HEK293 (cell line): ENCODE measurements at regions of chr6 and their contacts with region 1.

Region 1: DNA sequence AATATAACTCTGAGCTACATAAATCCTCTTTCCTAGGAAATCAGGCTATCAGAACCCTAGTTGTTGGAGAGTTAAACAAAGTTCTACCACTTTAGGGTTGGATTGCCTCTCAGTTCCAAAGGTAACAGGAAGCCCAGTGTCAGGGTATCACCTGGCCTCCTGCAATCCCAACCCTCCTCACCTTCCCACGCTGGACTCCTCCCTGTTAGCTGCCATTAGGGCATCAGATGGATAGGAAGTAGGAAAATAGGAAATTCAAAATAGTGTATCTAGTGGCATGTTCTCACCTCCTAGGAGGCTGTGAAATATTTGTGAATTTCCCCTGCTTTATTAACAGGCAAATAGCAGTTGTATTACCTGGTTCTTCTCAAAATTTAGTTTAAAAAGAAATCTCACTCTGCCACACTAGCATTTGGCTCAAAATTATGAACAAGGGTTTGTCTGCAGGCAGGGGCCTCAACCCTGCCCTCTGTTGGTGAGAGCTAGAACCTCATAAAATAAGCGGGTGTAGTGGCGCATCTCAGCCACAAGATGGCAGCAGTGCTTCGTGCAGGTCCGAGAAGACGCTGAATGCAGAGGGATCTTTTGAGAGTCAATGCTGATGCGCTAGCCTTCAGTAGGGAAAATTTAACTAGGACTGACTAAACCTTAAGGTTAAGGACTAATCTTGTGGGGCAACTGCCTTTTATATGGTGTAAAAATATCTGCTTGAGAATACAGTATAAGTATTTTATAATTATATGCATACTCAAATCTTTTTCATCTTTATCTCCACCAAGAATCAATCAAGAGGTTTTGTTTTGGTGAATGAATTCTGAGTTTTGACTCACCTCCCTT is 209.8 kb upstream of the KCNQ5 start:
- H3K4me3 ChIP-seq: no peak overlapping the region
- H3K27ac ChIP-seq: no peak overlapping the region
- H3K4me1 ChIP-seq: no peaks in the 10 kb centered on the region
- CTCF ChIP-seq: peak; percentile 98

Region 2: GRCh38 chr6:72381076-72381475 is 31.0 kb before region 1 on chr6:
- CTCF ChIA-PET with region 1: interaction called, 13 read pairs
- POLR2A ChIA-PET with region 1: no interaction called
- H3K4me3 ChIP-seq: no peak overlapping the region
- H3K27ac ChIP-seq: no peak overlapping the region
- H3K4me1 ChIP-seq: no peaks in the 10 kb centered on the region
- CTCF ChIP-seq: no peak

Region 3: GRCh38 chr6:72425003-72425681 is 13.1 kb after region 1 on chr6:
- CTCF ChIA-PET with region 1: interaction called, 58 read pairs
- POLR2A ChIA-PET with region 1: no interaction called
- H3K4me3 ChIP-seq: no peak overlapping the region
- H3K27ac ChIP-seq: no peak overlapping the region
- H3K4me1 ChIP-seq: no peaks in the 10 kb centered on the region
- CTCF ChIP-seq: no peak

Region 4: DNA sequence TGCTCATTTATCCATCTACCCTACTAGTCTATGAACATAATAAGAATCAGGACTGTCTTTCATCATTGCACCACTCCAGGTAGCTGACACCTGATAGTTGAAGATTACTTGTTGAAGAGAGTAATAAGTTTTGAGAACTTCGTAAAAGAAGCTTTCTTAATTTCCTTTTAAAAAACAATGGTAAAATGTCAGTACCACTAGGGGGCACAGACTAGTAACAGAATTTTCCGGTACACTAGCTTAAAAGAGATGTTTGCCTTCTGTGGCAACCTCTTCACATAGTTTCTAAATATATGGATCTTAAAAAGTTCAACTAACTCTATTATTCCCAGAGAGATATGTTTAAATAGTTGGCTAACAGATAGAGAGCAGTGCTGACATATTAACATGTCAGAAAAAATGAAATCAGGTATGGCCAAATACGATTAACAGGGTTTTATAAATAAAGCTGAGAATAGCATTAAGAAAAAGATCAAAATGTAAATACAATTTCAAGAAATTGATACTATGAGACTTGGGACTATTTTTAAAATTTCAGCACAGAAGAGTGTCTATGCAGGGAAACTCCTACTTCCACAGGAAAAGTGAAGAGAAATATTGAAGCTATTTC is 204.4 kb after region 1 on chr6:
- CTCF ChIA-PET with region 1: interaction called, 18 read pairs
- POLR2A ChIA-PET with region 1: no interaction called
- H3K4me3 ChIP-seq: no peak overlapping the region
- H3K27ac ChIP-seq: no peak overlapping the region
- H3K4me1 ChIP-seq: no peaks in the 10 kb centered on the region
- CTCF ChIP-seq: no peak

Region 5: DNA sequence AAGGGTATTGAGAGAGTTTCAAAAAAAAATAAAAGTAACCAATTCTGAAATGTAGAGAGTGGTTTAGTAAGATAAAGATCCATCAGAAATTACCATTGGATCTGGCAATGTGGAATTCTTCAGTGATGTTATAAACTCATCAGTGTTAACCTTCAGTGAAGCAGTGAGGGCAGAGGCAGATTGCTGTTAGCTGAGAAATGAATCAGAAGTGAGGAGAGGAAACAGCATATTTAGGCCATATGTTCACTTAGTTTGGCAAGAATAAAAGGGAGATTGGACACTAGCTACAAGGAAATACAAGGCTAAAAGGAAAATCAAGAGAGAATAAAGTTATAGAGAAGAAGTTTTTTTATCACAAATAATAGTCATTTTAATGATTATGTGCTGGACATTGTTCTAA is 219.4 kb after region 1 on chr6:
- CTCF ChIA-PET with region 1: no interaction called
- POLR2A ChIA-PET with region 1: no interaction called
- H3K4me3 ChIP-seq: no peak overlapping the region
- H3K27ac ChIP-seq: no peak overlapping the region
- H3K4me1 ChIP-seq: no peaks in the 10 kb centered on the region
- CTCF ChIP-seq: no peak

Region 6: GRCh38 chr6:73329201-73329600 is 917.1 kb after region 1 on chr6:
- CTCF ChIA-PET with region 1: interaction called, 25 read pairs
- POLR2A ChIA-PET with region 1: no interaction called
- H3K4me3 ChIP-seq: no peak overlapping the region
- H3K27ac ChIP-seq: no peak overlapping the region
- H3K4me1 ChIP-seq: no peaks in the 10 kb centered on the region
- CTCF ChIP-seq: no peak